ENCODE measurements at regions of chr11 and their contacts with region 1.

Region 1: GRCh38 chr11:4187055-4187988 is 92.7 kb downstream of the RRM1 start:
- DNase-seq: peak; percentile 92
- H3K4me3 Mint-ChIP-seq: peak overlapping the region; percentile 71
- H3K27ac Mint-ChIP-seq: no peak overlapping the region
- H3K4me1 Mint-ChIP-seq: no peaks in the 10 kb centered on the region
- H3K27me3 Mint-ChIP-seq: no peaks in the 10 kb centered on the region
- CTCF ChIP-seq: peak; percentile 96

Region 2: DNA sequence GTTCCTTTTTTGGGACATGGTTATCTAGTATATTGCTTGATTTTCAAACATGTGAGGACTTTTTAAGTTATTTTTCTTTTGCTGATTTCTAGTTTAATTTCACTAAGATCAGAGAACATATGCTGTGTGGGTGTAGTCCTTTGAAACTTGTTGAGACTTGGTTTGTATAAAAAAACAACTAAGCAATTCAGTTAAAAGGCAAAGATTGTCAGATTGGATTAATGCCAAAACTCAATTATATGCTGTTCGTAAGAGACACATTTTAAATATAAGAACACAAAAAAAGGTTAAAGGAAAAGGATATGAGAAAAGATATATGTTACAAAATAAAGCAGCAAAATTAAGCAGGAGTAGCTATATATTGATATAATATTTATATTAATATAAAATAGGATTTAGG is 110.5 kb before region 1 on chr11:
- CTCF ChIA-PET with region 1: no interaction called
- intact Hi-C with region 1: no loop called
- DNase-seq: no peak
- H3K4me3 Mint-ChIP-seq: no peak overlapping the region
- H3K27ac Mint-ChIP-seq: no peak overlapping the region
- H3K4me1 Mint-ChIP-seq: no peaks in the 10 kb centered on the region
- H3K27me3 Mint-ChIP-seq: no peaks in the 10 kb centered on the region
- CTCF ChIP-seq: no peak

Region 3: GRCh38 chr11:4539603-4540219 is 352.4 kb after region 1 on chr11:
- CTCF ChIA-PET with region 1: interaction called, 53 read pairs
- intact Hi-C with region 1: loop called (anchors 1 kb)
- DNase-seq: peak; percentile 73
- H3K4me3 Mint-ChIP-seq: no peak overlapping the region
- H3K27ac Mint-ChIP-seq: no peak overlapping the region
- H3K4me1 Mint-ChIP-seq: no peaks in the 10 kb centered on the region
- H3K27me3 Mint-ChIP-seq: peaks cover 43% of the 10 kb centered on the region
- CTCF ChIP-seq: peak; percentile 46

Region 4: GRCh38 chr11:4607781-4608666 is 420.7 kb after region 1 on chr11 and contains the start of gene TRIM68:
- CTCF ChIA-PET with region 1: no interaction called
- intact Hi-C with region 1: loop called (anchors 5 kb)
- DNase-seq: peak; percentile 96
- H3K4me3 Mint-ChIP-seq: peak within 1 kb of the TSS; percentile 88
- H3K27ac Mint-ChIP-seq: peak within 1 kb of the TSS; percentile 69
- H3K4me1 Mint-ChIP-seq: peaks cover 26% of the 10 kb centered on the region
- H3K27me3 Mint-ChIP-seq: no peaks in the 10 kb centered on the region
- CTCF ChIP-seq: no peak
- total RNA-seq, gene TRIM68: 12.7 and 14.5 TPM in 2 replicates

Region 5: DNA sequence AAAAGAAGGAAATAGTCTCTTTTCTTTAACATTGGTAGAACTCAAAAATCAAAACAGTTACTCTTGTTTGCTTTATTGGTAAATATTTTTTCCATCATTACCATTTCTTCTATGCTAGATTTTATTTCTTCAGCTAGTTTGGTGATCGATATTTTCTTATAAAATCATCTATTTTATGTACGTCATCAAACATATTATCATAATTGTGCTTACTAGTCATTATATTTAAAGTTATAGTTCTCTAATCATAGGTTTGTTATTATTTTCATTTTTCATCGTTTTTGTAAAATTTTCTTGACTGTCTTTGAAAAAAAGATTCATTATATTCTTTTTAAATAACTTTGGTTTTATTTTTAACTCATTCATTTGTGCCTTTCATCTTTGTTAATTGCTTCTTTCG is 630.9 kb after region 1 on chr11:
- CTCF ChIA-PET with region 1: no interaction called
- intact Hi-C with region 1: loop called (anchors 5 kb)
- DNase-seq: no peak
- H3K4me3 Mint-ChIP-seq: no peak overlapping the region
- H3K27ac Mint-ChIP-seq: no peak overlapping the region
- H3K4me1 Mint-ChIP-seq: peaks cover 7% of the 10 kb centered on the region
- H3K27me3 Mint-ChIP-seq: no peaks in the 10 kb centered on the region
- CTCF ChIP-seq: no peak

Region 6: DNA sequence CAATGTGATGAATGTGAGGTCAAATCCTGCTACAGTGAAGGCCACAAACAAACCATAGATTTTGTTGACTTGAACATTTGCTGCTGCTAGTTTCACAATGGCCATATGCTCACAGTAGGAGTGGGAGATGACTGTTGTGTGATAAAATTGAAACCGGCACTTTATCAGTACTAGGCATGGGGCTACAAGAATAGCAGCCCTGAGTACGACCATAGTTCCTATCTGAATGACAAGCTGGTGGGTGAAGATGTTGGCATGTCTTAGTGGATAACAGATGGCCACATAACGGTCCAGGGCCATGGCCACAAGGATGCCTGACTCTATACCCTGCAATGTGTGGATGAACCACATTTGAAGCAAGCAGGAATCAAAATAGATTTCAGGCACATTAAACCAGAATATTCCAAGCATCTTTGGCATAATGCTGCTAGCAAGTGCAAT is 964.4 kb after region 1 on chr11:
- CTCF ChIA-PET with region 1: no interaction called
- intact Hi-C with region 1: no loop called
- DNase-seq: no peak
- H3K4me3 Mint-ChIP-seq: no peak overlapping the region
- H3K27ac Mint-ChIP-seq: no peak overlapping the region
- H3K4me1 Mint-ChIP-seq: no peaks in the 10 kb centered on the region
- H3K27me3 Mint-ChIP-seq: no peaks in the 10 kb centered on the region
- CTCF ChIP-seq: no peak